Activated CD4-positive, alpha-beta T cell treated with anti-CD3 and anti-CD28 coated beads, Interleukin-2, amount 10 ng/mL, durations not matched to agents 24 days and 14 days (primary cell): ENCODE measurements at regions of chr9 and their contacts with region 1.

Region 1: GRCh38 chr9:105694190-105694847 is at the start of gene TMEM38B:
- DNase-seq: peak; percentile 95
- H3K4me3 Mint-ChIP-seq: peak within 1 kb of the TSS; percentile 82
- H3K27ac Mint-ChIP-seq: peak within 1 kb of the TSS; percentile 63
- H3K4me1 Mint-ChIP-seq: peaks cover 16% of the 10 kb centered on the region
- H3K27me3 Mint-ChIP-seq: peaks cover 26% of the 10 kb centered on the region
- total RNA-seq, gene TMEM38B: 10.9 and 12.0 TPM in 2 replicates

Region 2: DNA sequence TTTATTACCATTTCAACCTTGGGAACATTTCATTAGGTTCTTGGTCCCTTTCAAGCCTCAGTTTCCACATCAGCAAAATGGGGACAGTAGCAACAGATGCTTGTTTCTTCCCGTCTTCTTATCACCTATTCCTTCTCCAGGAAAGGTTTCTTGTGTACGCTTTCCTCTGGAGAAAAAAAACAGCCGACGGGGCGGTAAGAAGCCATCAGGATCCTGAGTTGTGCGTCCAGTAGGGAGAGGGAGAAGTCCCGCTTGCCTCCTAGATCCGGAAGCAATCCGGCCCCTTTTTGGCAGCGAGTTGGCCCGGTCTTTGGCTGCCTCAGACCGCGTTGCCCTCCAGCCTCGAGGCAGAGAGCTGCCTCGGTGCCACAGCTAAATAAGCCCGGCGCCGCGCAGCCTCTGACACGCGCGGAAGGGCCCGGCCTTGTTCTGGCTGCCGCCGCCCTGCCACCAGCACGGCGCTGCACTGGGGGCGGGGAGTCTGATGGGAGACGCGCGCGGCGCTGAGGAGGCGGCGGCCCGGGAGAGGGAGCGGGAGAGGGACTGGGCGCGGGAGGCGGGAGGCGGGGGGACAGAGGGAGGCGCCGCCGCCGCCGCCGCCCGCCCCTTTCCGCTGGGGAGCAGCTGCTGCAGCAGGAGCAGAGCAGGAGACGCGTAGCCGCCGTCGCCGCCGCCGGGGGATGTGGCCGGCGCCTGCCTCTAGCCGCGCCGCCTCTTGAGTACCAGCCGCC is 450.2 kb before region 1 on chr9 and contains the start of gene SLC44A1:
- intact Hi-C with region 1: loop called (anchors 2 kb)
- DNase-seq: peak; percentile 98
- H3K4me3 Mint-ChIP-seq: peak within 1 kb of the TSS; percentile 88
- H3K27ac Mint-ChIP-seq: peak within 1 kb of the TSS; percentile 74
- H3K4me1 Mint-ChIP-seq: peaks cover 22% of the 10 kb centered on the region
- H3K27me3 Mint-ChIP-seq: peaks cover 73% of the 10 kb centered on the region
- total RNA-seq, gene SLC44A1: 2.5 and 2.9 TPM in 2 replicates

Region 3: GRCh38 chr9:105447814-105448812 is 246.2 kb before region 1 on chr9 and contains the start of gene FSD1L:
- intact Hi-C with region 1: loop called (anchors 10 kb)
- DNase-seq: peak; percentile 96
- H3K4me3 Mint-ChIP-seq: peak within 1 kb of the TSS; percentile 91
- H3K27ac Mint-ChIP-seq: peak within 1 kb of the TSS; percentile 66
- H3K4me1 Mint-ChIP-seq: peaks cover 22% of the 10 kb centered on the region
- H3K27me3 Mint-ChIP-seq: peaks cover 6% of the 10 kb centered on the region
- total RNA-seq, gene FSD1L: 4.4 and 4.8 TPM in 2 replicates

Region 4: GRCh38 chr9:105557771-105558610 is 136.3 kb before region 1 on chr9 and contains the start of gene FKTN:
- intact Hi-C with region 1: loop called (anchors 2 kb)
- DNase-seq: peak; percentile 94
- H3K4me3 Mint-ChIP-seq: peak within 1 kb of the TSS; percentile 94
- H3K27ac Mint-ChIP-seq: peak within 1 kb of the TSS; percentile 86
- H3K4me1 Mint-ChIP-seq: peaks cover 11% of the 10 kb centered on the region
- H3K27me3 Mint-ChIP-seq: no peaks in the 10 kb centered on the region
- total RNA-seq, gene FKTN: 17.3 and 17.4 TPM in 2 replicates

Region 5: DNA sequence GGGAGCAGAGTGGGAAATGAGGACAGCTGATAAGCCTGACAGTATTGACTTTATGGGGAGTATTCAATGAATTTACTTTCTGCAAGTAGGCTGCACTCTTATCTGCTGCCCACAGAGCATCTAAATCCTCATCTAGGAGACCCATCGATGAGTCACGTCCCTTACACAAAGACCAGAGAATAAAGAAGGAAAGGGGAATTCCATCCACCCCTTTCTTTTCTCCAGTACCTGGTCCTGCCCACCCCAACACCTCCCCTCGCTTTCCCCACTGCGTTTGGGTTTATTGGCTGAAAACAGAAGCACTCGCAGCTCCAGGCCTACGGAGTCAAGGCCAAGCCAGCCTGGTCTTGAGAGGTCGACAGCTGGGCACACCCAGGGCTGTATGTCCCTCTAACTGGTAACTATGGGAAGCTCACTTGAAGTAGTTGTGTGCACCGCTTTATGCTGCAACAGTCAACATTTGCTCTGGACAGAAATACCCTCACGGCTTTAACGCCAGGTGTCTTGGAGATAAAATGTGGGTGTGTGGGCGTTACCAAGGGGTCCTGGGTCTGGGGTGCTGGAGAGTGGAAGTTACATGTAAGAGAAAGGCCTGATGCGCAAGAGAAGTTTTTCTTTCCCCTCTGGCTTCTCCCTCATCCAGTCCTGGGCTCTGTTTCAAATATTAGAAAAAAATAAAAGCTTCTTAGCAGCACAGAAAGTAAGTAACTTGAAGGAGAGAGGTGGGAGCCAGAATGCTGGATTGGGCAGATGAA is 46.5 kb before region 1 on chr9:
- intact Hi-C with region 1: no loop called
- DNase-seq: peak; percentile 38
- H3K4me3 Mint-ChIP-seq: no peak overlapping the region
- H3K27ac Mint-ChIP-seq: no peak overlapping the region
- H3K4me1 Mint-ChIP-seq: no peaks in the 10 kb centered on the region
- H3K27me3 Mint-ChIP-seq: no peaks in the 10 kb centered on the region

Region 6: DNA sequence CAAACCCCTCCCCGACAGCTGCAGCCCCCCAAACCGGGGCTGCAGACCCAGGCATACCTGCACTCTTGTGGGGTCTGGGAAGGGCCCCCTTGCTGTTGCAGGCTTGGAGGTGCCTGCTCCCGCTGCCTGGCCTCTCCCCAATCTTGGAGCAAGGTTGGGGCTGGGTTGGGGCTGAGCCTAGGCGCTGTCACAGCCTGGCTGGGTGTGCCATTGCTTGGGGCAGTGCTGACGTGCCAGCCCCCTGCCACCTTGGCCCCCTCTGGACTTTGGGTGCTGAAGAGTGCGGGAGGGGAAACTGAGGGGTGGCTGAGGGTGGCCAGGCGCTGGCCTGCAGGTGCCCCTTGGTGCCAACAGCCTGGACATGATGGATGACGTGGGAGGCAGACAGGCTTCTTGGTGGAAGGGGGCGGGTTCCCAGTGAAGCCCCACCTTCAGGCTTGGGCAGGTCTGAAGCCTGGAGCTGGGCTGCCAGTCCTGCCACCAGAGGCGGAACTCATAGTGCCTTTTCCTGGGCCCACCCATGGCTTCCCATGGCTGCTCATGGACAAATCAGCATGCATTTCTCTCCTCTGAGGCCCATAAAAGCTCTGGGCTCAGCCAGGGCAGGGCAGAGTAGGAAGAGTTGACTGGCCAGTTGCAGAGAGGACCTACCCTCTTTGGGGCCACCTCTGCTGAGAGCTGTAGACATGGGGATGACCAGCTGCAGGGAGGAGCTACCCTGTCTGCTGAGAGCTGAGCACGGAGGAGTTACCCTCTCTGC is 19.1 kb after region 1 on chr9:
- intact Hi-C with region 1: loop called (anchors 1 kb)
- DNase-seq: no peak
- H3K4me3 Mint-ChIP-seq: no peak overlapping the region
- H3K27ac Mint-ChIP-seq: no peak overlapping the region
- H3K4me1 Mint-ChIP-seq: peaks cover 4% of the 10 kb centered on the region
- H3K27me3 Mint-ChIP-seq: no peaks in the 10 kb centered on the region